ENCODE measurements at regions of chr4 and their contacts with region 1.

Region 1: DNA sequence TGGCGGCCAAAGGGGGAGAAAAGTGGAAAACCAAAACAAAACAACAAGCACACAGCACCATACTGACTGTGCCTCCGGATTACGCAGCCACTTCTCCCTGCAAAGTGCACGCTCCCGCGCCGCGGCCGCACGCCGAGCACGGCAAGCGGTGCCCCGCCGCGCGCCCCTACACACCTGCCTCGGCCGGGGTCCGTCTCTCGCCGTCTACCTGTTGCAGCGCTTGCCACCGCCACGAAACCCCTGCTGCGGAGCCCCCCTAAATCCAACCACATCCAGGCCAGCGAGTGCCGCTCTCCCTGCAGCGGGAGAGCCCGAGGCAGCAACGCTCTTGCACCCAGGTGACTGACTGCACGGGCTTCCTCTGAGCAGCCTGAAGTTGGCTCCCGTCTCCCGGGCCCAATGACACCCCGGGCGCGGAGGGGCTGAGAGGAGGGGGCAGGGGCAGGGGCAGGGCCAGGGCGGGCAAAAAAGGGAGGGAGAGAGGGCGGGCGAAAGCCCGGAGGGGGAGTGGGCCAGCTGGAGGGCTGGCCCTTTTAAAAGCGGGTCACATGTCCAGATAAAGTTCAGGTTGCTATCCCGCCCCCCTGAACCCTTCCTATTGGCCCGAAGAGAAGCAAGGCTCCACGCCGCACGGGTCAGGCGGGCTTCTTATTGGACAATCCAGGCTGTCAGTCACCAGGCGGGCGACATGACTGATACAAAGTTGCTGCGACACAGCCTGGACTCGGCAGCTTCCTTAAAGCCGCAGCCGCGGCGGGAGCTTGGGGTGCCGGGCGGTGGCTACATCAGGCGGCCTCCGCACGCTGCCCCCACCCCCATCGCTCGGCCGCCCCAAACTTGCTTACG is at the start of gene NR3C2:
- DNase-seq: peak; percentile 97 to 98 (median 98)
- H3K4me3 ChIP-seq: peak within 1 kb of the TSS; percentile 56 to 95 (median 85)
- H3K4me3 Mint-ChIP-seq: peak within 1 kb of the TSS; percentile 96 to 100
- H3K27ac ChIP-seq: peak within 1 kb of the TSS; percentile 25 to 82
- H3K27ac Mint-ChIP-seq: peak within 1 kb of the TSS; percentile 3 to 92 (median 78)
- H3K4me1 ChIP-seq: peaks cover 30 to 46% of the 10 kb centered on the region in 2 donors
- H3K4me1 Mint-ChIP-seq: peaks cover 30% of the 10 kb centered on the region
- H3K27me3 ChIP-seq: peaks cover 67 to 82% of the 10 kb centered on the region in 2 donors
- H3K27me3 Mint-ChIP-seq: peaks cover 68 to 88% (median 74%) of the 10 kb centered on the region in 3 donors
- CTCF ChIP-seq: no peak
- polyA plus RNA-seq, gene NR3C2: 0.09 to 0.27 (median 0.20) TPM

Region 2: DNA sequence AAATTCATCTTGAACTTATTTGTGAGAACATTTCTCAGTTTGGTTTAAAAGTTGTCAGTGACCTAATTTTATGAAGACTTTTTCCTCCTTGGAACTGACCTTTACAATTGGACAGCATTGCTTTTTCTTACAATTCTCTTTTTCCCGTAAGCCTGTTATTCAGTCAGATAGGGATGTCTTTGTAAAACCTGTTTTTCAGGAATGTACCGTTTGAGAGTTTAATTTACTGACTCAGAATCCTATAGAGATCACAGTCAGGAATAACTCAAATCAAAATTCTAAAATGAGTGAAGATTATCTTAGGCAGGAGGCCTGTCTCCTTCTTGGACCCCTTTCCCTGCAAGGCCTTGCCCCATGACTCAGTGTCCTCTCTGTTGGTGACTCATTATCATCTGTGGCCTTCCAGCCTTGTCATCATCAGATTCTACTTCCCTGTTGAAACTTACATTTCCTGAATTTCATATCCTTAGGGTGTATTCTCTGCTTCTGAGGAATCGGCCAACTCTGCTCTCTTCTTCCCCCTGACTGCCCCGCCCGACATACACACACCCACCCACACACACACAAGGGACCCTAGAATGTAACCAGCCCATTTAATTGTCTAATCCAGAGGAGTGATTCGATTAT is 610.5 kb before region 1 on chr4:
- intact Hi-C with region 1: loop called in 1 of 2 experiments (anchors 10 kb)
- DNase-seq: peak; percentile 93 to 98 (median 97)
- H3K4me3 ChIP-seq: peak overlapping the region in 1 of 3 experiments; percentile 56
- H3K4me3 Mint-ChIP-seq: peak overlapping the region; percentile 64 to 84
- H3K27ac ChIP-seq: peak overlapping the region; percentile 91 to 99
- H3K27ac Mint-ChIP-seq: peak overlapping the region; percentile 97 to 99 (median 98)
- H3K4me1 ChIP-seq: peaks cover 52 to 59% of the 10 kb centered on the region in 2 donors
- H3K4me1 Mint-ChIP-seq: peaks cover 56% of the 10 kb centered on the region
- H3K27me3 ChIP-seq: no peaks in the 10 kb centered on the region
- H3K27me3 Mint-ChIP-seq: no peaks in the 10 kb centered on the region
- CTCF ChIP-seq: no peak

Region 3: GRCh38 chr4:148065075-148065474 is 377.1 kb before region 1 on chr4:
- intact Hi-C with region 1: loop called in 1 of 2 experiments (anchors 10 kb)
- DNase-seq: no peak
- H3K4me3 ChIP-seq: no peak overlapping the region
- H3K4me3 Mint-ChIP-seq: no peak overlapping the region
- H3K27ac ChIP-seq: no peak overlapping the region
- H3K27ac Mint-ChIP-seq: peak overlapping the region in 1 of 7 donors; percentile 27
- H3K4me1 ChIP-seq: peaks cover 0 to 5% of the 10 kb centered on the region in 2 donors
- H3K4me1 Mint-ChIP-seq: peaks cover 5% of the 10 kb centered on the region
- H3K27me3 ChIP-seq: no peaks in the 10 kb centered on the region
- H3K27me3 Mint-ChIP-seq: peaks cover 0 to 5% (median 3%) of the 10 kb centered on the region in 3 donors
- CTCF ChIP-seq: no peak

Measured in CD14-positive monocyte (primary cell).